ENCODE measurements at regions of chr16 and their contacts with region 1.

Region 1: DNA sequence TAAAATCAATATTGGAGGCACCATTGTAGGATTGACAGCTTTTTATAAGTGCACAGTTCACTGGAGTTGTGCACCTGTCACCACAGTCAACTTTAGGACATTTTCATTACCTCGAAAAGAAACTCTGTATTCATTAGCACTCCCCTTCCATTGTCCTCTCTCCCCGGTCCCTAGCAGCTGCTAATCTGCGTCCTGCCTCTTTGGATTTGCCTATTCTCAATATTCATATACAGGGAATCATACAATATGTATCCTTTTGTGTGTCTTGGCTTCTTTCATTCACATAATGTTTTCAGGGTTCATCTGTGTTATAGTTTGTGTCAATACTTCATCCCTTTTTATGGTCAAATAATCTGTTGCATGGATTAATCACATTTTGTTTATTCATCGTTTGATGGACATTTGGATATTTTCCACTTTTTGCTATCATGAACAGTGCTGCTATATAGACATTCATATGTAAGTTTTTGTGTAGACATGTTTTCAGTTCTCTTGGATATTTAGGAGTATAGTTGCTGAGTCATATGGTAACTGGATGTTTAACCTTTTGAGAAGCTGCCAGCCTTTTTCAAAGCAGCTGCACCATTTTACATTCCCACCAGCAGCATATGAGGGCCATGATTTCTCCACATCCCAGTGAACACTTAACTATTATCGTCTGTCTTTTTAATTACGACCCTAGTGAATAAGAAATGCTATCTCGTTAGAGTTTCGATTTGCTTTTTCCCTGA is 9.8 kb downstream of the DNAJA3 start:
- DNase-seq: no peak
- H3K4me3 Mint-ChIP-seq: no peak overlapping the region
- H3K27ac Mint-ChIP-seq: peak overlapping the region; percentile 11
- H3K4me1 Mint-ChIP-seq: peaks cover 14% of the 10 kb centered on the region
- H3K27me3 Mint-ChIP-seq: no peaks in the 10 kb centered on the region
- CTCF ChIP-seq: no peak

Region 2: GRCh38 chr16:4425378-4426020 is 10.0 kb before region 1 on chr16 and contains the start of gene DNAJA3:
- CTCF ChIA-PET with region 1: no interaction called
- POLR2A ChIA-PET with region 1: interaction called, 14 read pairs
- intact Hi-C with region 1: no loop called
- DNase-seq: peak; percentile 95
- H3K4me3 Mint-ChIP-seq: peak within 1 kb of the TSS; percentile 95
- H3K27ac Mint-ChIP-seq: peak within 1 kb of the TSS; percentile 97
- H3K4me1 Mint-ChIP-seq: peaks cover 11% of the 10 kb centered on the region
- H3K27me3 Mint-ChIP-seq: no peaks in the 10 kb centered on the region
- CTCF ChIP-seq: no peak
- total RNA-seq, gene DNAJA3: 98.1 and 101 TPM in 2 replicates

Measured in MCF 10A (cell line).